HEK293 (cell line): ENCODE measurements at regions of chr14 and their contacts with region 1.

Region 1: GRCh38 chr14:37150414-37150813 is 22.0 kb downstream of the SLC25A21 start:
- H3K4me3 ChIP-seq: no peak overlapping the region; the same call in 1 of the 2 replicates
- H3K27ac ChIP-seq: no peak overlapping the region
- H3K4me1 ChIP-seq: peaks cover 6% of the 10 kb centered on the region; the same call in 1 of the 2 replicates
- CTCF ChIP-seq: peak; percentile 19; the same call in 1 of the 2 replicates

Region 2: GRCh38 chr14:36604757-36605505 is 545.5 kb before region 1 on chr14:
- CTCF ChIA-PET with region 1: interaction called, 14 read pairs
- POLR2A ChIA-PET with region 1: no interaction called
- H3K4me3 ChIP-seq: no peak overlapping the region
- H3K27ac ChIP-seq: no peak overlapping the region
- H3K4me1 ChIP-seq: no peaks in the 10 kb centered on the region
- CTCF ChIP-seq: peak; percentile 58; the same call in 1 of the 2 replicates

Region 3: DNA sequence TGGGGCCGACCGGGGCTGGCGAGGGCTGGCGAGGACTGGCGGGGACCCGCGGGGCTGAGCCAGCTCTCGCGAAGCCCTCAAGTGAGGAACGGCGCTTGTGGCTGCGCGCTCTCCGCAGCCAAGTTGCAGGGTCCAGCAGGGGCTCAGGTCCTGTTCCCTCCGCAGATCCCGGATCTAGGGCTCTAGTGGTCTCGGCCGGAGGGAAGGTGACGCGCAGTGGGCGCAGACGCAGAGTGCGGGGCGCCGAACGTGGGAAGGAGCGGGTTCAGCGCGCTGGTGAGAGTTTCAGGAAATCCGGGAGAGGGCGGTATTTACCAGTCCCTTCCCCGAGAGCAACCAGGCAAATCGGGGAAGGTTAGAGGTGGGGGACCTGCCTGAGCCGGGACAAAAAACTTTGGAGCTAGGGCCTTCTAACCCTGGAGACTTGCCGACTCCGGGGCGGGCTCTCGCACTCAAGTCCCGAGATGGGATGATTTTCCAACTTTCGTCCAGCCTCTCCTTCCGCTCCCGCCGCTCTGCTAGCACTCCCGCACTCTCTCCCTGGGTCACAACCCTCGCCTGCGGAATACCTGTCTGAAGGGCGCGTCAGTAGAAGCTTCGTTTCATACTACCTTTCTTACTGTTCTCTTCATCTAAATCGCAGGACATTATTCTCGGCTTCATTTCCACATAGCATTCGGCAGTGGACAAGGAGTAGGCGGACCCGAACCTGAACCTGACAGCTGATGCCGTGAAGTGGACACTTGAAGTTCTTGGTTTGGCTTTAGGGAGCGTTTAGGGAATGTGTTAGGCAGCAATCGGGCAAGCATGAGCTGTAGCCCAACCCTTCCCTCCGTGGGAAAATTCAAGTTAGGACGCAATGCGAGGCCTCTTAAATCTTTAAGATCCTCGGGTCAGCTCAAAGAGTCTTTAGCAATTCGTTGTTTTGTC is 502.3 kb before region 1 on chr14:
- CTCF ChIA-PET with region 1: interaction called, 18 read pairs
- POLR2A ChIA-PET with region 1: no interaction called
- H3K4me3 ChIP-seq: peak overlapping the region; percentile 47
- H3K27ac ChIP-seq: peak overlapping the region; percentile 70; the same call in 1 of the 2 replicates
- H3K4me1 ChIP-seq: peaks cover 15% of the 10 kb centered on the region
- CTCF ChIP-seq: no peak

Region 4: GRCh38 chr14:37116933-37117849 is 33.2 kb before region 1 on chr14:
- CTCF ChIA-PET with region 1: interaction called, 20 read pairs
- POLR2A ChIA-PET with region 1: no interaction called
- H3K4me3 ChIP-seq: peak overlapping the region; percentile 15; the same call in 1 of the 2 replicates
- H3K27ac ChIP-seq: peak overlapping the region; percentile 89
- H3K4me1 ChIP-seq: peaks cover 26% of the 10 kb centered on the region
- CTCF ChIP-seq: peak; percentile 72; the same call in 1 of the 2 replicates

Region 5: DNA sequence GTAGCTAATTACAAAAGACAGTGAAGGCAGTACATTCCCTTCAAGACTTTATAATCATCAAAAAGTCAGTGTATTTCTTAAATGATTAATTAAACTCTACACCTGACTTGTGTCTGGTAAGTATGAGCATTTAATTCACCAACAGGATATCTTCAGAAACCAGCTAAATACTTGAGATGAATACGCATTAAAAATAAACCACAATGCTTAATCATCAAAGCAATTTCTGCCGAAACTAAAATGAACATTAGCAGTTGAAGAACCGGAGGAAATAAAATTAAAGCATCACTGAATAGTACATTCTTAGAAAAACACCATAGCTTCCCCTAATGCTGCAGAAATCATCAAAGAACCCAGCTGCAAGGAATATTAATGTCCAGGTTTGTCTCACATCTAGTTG is 10.7 kb before region 1 on chr14:
- CTCF ChIA-PET with region 1: interaction called, 29 read pairs
- POLR2A ChIA-PET with region 1: no interaction called
- H3K4me3 ChIP-seq: no peak overlapping the region
- H3K27ac ChIP-seq: no peak overlapping the region
- H3K4me1 ChIP-seq: 0 out of 2 replicates have a peak, but pooled peaks cover 2% of the 10 kb centered on the region
- CTCF ChIP-seq: no peak

Region 6: GRCh38 chr14:37172024-37172869 is 21.8 kb after region 1 on chr14 and contains the start of gene SLC25A21:
- CTCF ChIA-PET with region 1: interaction called, 10 read pairs
- POLR2A ChIA-PET with region 1: no interaction called
- H3K4me3 ChIP-seq: peak within 1 kb of the TSS; percentile 75
- H3K27ac ChIP-seq: peak within 1 kb of the TSS; percentile 94
- H3K4me1 ChIP-seq: no peaks in the 10 kb centered on the region; the same call in 1 of the 2 replicates
- CTCF ChIP-seq: peak; percentile 36